ENCODE measurements at regions of chr1 and their contacts with region 1.

Region 1: DNA sequence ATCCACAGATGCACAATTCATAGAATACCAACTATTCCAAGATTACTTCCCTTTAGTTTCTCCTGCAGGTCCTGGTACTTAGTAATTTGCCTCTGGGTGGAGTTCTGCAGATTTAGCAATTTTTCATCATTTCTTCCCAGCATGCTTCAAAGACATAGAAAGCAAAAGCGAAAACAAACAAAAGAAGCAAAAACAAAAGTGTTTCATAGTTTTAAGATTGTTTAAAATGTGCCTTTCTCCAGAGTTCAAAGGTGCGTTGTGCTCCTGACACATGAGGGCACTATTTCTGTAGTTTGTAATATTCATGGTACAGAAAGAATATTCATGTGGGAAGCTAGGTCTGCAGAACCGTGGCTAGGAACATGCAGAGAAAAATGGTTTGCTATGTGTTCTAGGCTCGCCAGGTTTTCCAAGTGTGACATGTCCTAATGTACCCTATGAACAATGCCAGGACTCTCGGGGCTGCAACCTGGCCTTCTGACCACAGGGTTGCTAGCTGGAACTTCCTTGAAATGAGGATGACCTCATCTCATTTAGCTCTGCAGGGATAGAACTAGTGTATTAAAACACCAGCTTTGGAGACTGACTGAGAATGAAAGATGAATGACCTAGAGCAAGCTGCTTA is 30.0 kb upstream of the RCSD1 start:
- DNase-seq: peak; percentile 62
- CTCF ChIP-seq: peak; percentile 72

Region 2: DNA sequence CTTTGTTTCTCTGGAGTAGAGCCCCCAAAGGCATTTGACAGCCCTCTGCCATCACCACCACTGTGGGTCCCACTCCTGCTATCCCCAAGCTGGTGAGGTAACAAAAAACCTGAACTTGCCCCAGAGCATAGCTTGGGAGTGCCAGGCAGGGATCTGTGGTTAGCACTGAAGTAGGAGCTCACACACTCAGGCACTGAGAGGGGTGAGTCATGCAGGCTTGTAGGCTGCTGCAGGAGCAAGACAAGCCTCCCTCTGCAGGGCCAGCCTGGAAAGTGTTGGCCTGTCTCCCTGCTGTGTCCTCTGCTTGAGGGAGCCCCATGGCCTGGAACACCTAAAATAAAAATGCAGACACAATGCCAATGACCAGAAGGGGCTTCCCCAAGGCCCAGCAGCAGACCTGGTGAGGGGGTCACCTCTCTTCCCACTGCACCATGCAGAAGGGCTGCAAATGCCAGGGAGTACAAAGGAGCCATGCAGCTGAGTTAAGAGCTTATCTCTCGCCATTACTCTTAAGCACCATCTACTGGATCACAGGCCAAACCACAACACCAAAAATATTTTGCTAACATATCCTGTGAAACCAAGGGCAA is 869.7 kb before region 1 on chr1:
- in situ Hi-C with region 1: no loop called
- DNase-seq: no peak
- CTCF ChIP-seq: no peak

Region 3: DNA sequence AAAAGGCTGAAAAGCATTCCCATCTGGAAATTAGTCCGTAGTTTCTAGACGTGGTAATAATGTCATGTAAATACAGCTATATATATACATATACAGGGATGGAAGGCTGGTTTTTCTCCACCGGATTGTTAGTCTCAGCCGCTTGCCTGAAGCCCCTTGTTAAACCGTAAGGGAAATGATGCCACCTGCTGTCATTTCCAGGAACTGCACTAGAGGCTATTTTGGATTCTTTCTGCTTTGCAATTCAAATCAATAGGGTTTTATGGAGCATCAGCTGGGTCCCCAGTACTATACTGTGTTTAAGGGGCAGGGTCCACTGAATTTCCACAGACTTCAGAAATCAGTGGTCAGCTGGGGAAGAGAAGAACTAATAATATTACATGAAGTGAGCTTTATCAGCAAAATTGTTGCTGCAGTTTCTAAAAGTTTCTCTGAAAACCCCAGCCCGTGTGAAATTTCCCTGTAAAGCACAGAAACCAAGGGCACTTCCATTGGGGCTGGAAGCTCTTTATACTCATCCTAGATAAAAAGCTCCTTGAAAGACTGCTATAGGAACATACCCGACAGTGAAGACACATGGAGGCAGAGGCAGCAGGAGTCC is 88.0 kb after region 1 on chr1:
- in situ Hi-C with region 1: loop called (anchors 10 kb)
- DNase-seq: peak; percentile 82
- CTCF ChIP-seq: peak; percentile 88

Measured in GM13977 (cell line).